ENCODE measurements at regions of chr17 and their contacts with region 1.

Region 1: DNA sequence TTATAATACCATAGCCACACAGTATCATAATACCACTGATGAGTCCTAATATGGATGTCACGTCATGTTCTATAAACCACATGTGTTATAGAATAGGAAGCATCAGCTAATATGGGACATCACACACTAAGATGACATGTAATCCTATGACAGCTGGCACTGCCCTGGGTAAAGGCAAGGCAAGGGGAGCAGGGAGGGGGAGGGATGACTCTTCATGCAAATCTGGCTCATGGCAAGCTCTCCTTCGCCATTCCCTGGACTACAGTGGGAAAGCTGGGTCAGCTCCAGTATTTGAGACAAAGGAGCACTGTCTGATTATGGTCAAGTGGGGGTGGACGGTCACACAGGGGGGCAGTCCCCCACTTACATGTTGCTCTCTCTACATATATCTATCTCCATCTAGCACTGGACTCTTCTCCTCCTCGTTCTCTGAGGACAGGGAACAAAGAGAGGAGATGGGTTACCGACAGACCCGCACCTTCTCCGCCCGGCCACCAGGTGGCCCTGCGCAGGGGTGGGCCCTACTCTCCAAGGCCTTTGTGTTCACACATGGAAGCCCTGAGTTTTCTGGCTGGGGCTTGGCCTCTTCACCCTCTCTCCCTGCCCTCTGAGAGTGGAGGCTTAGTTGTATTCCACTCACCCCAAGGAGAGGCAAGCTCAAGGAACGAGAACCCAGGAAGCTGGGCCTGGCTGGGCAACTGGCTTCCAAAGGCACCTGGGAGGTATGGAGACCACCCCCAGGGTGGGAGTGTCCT is 23.4 kb upstream of the MPO start:
- DNase-seq: peak; percentile 63 to 76 (median 68)
- H3K4me3 ChIP-seq: no peak overlapping the region
- H3K27ac ChIP-seq: no peak overlapping the region
- H3K4me1 ChIP-seq: peaks cover 0 to 46% (median 4%) of the 10 kb centered on the region in 4 experiments
- H3K27me3 ChIP-seq: no peaks in the 10 kb centered on the region

Region 2: GRCh38 chr17:58020401-58020800 is 283.7 kb before region 1 on chr17:
- CTCF ChIA-PET with region 1: no interaction called
- POLR2A ChIA-PET with region 1: no interaction called
- DNase-seq: no peak
- H3K4me3 ChIP-seq: no peak overlapping the region
- H3K27ac ChIP-seq: no peak overlapping the region
- H3K4me1 ChIP-seq: no peaks in the 10 kb centered on the region
- H3K27me3 ChIP-seq: peaks cover 0 to 3% (median 2%) of the 10 kb centered on the region in 5 experiments

Region 3: DNA sequence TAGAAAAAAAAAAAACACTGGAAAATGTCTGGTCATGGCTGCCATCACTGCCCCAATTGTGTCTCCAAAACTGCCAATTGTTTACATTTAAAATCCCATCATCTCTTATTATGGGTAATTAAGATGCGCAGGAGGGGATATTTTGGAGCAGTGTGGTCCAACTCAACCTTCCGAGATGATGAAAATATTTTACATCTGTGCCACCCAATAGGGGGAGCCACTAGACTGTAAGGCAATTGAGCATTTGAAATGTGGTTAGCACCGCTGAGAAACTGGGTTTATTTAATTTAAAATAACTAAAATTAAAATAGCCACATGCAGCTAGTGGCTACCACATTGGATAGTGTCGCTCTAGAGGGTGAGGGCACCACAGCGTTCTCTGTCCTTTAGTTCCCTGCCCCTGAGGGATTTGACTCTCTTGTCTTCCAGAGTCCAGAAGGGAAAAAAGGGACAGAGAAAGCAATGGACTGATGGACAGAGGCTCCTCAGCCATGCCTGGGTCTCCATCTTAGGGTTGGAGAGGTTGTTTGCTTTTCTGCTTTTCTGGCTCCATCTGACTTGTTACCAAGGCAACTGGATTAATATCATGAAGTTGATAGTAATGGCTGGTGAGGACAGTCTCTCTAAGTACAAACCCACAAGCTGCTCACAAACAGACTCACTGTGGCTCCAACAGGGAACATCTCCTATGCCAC is 26.9 kb before region 1 on chr17:
- CTCF ChIA-PET with region 1: interaction called, 12 read pairs
- POLR2A ChIA-PET with region 1: no interaction called
- DNase-seq: peak; percentile 34 to 77 (median 72)
- H3K4me3 ChIP-seq: peak overlapping the region in 1 of 7 experiments; percentile 64
- H3K27ac ChIP-seq: no peak overlapping the region
- H3K4me1 ChIP-seq: peaks cover 0 to 64% (median 37%) of the 10 kb centered on the region in 4 experiments
- H3K27me3 ChIP-seq: no peaks in the 10 kb centered on the region

Region 4: DNA sequence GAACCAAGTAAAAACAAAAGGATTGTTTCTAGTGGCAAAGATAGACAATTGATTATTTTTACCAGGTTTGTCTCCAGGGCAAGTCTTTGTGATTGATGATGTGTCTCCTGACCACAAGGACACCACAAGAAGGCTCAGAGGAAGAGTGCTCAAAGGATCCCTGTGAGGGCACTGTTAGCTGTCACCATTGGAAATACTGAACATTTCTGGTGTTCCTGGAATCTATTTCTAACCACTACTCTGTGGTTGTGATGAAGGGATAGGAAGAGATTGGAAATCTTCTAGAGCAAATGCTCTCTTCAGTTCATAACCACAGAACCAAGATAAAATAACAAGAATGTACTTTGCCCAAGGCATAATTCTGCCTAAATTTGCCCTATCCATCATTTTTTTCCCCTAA is 97.9 kb after region 1 on chr17:
- CTCF ChIA-PET with region 1: no interaction called
- POLR2A ChIA-PET with region 1: no interaction called
- DNase-seq: peak in 1 of 3 donors; percentile 20
- H3K4me3 ChIP-seq: no peak overlapping the region
- H3K27ac ChIP-seq: no peak overlapping the region
- H3K4me1 ChIP-seq: peaks cover 0 to 11% (median 1%) of the 10 kb centered on the region in 4 experiments
- H3K27me3 ChIP-seq: no peaks in the 10 kb centered on the region

Measured in common myeloid progenitor, CD34-positive (primary cell).